Mammary epithelial cell (primary cell): ENCODE measurements at regions of chr14 and their contacts with region 1.

Region 1: DNA sequence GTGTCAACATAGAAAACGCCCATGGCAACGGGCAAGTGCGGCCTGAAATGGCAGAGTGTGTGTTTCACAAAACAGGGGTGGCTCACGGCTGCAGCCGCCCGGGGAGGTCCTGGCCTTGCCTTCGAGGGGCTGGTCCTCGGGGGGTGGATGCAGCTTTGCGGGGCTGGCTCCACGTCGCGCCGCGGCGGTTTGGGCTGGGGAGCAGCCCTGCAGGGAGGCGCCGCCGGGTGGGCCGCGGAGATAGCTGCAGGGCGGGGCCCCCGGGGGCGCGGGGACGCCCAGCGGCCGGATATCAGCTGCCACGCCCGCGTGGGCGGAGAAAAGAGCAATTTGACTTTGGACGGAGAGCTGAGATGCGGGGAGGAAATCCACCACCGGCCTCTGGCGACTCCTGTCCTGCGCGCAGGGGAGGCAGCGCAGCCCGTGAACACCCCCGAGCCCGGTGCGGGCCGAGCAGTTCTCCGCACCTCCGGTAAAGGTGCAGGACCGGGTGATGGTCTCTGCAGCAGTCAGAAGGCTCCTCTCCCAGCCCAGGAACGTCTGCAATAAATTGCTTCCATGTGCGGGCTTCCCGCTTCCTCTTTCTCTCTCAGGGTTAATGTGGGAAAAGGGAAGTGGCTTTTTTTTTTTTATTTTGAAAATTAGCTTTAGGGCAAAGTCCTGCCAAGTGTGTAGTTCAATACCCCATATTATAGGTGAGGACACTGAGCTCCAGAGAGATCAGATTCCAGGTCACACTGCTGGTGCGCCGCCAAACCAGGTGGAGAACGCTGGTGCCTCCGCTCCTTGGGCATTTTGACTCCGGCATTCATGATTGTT is 110.5 kb downstream of the ARF6 start:
- DNase-seq: peak; percentile 78
- H3K4me3 ChIP-seq: peak overlapping the region; percentile 32 to 46 (median 42)
- H3K27ac ChIP-seq: peak overlapping the region; percentile 97
- H3K4me1 ChIP-seq: peaks cover 73% of the 10 kb centered on the region
- H3K27me3 ChIP-seq: no peaks in the 10 kb centered on the region
- CTCF ChIP-seq: peak in 1 of 2 donors; percentile 21

Region 2: DNA sequence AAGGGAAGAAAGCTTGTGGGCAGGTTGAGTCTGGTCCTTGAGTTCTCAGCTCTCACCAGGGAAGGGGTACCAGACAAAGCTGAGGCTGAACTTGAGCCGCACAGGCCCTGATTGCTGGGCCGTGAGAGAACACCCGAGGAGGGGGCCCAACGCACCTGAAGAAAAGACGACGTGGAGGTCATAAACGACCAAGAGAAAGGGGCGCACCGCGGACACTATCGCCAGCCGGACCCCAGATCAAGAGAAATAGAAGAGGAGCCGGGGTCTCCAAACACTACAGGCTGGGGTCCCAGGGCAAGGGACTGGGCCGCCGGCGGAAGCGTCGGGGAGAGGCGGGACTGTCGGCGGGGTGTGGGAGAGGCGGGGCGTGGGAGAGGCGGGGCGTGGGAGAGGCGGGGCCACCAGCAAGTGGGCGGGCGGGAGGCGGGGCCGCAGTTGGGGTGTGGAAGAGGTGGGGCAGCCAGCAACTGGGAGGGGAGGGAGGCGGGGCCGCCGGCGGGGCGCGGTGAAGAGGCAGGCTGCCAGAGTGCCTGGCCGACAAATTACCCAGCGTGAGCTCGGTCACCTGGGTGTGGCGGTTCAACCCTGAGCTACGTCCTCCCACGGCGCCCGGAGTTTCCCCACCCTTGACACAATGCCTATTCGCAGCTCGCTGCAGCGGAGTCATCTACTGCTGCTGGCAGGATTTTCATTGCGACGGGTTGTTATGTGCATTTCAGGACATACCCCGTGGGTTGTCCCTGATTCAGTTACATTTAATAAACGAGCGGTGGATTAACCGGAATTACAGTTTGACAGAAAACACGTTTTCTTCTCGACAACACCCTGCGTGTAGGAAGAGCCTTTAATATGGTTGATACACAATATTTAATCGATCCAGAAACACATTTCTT is 135.3 kb before region 1 on chr14:
- CTCF ChIA-PET with region 1: no interaction called
- dilution Hi-C with region 1: no loop called
- in situ Hi-C with region 1: loop called in 1 of 2 experiments (anchors 5 kb)
- intact Hi-C with region 1: loop called (anchors 1 kb)
- DNase-seq: peak; percentile 97
- H3K4me3 ChIP-seq: peak overlapping the region; percentile 59 to 70 (median 60)
- H3K27ac ChIP-seq: peak overlapping the region; percentile 81
- H3K4me1 ChIP-seq: peaks cover 17% of the 10 kb centered on the region
- H3K27me3 ChIP-seq: no peaks in the 10 kb centered on the region
- CTCF ChIP-seq: no peak

Region 3: GRCh38 chr14:49908432-49908781 is 95.0 kb before region 1 on chr14:
- CTCF ChIA-PET with region 1: interaction called, 6 read pairs
- dilution Hi-C with region 1: loop called (anchors 5 kb)
- in situ Hi-C with region 1: no loop called
- intact Hi-C with region 1: no loop called
- DNase-seq: peak; percentile 65
- H3K4me3 ChIP-seq: no peak overlapping the region
- H3K27ac ChIP-seq: peak overlapping the region; percentile 94
- H3K4me1 ChIP-seq: peaks cover 34% of the 10 kb centered on the region
- H3K27me3 ChIP-seq: no peaks in the 10 kb centered on the region
- CTCF ChIP-seq: no peak

Region 4: GRCh38 chr14:49971156-49972130 is 32.0 kb before region 1 on chr14:
- CTCF ChIA-PET with region 1: no interaction called
- dilution Hi-C with region 1: no loop called
- in situ Hi-C with region 1: no loop called
- intact Hi-C with region 1: loop called (anchors 1 kb)
- DNase-seq: no peak
- H3K4me3 ChIP-seq: no peak overlapping the region
- H3K27ac ChIP-seq: peak overlapping the region; percentile 90
- H3K4me1 ChIP-seq: peaks cover 70% of the 10 kb centered on the region
- H3K27me3 ChIP-seq: no peaks in the 10 kb centered on the region
- CTCF ChIP-seq: no peak

Region 5: DNA sequence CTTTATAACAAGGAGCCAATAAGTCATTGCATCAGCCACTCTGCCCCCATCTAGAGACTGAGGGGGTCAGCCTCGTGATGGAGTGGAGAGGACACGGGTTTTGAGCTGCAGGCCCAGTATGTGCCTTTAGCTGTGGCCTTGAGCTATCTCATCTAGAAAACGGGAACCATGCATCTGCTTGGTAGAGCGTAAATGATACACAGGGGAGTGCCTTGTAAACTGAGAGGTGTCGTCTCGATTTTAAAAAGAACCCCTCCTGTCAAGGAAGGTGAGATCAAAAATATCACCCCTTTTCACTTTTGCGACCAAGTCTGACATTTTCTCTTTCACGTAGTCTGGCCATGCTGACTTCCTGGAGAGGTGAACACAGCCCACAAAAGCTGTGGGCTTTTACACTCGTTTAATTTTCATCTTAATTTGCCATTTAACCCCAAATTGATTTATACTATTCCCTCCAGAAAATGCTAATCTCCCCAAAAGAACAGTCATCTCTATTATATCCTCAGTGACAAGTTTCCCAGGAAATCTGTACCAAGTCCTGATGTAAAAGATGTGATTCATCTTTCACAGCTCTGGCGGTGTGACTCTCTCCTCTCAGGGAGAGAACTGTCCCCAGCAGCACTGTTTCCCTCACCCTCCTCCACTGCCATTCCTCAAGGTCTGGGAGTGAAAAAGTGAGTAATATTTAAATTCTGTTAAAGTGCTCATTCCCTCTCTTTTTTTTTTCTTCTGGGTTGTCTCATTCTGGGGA is 82.3 kb after region 1 on chr14:
- CTCF ChIA-PET with region 1: no interaction called
- dilution Hi-C with region 1: no loop called
- in situ Hi-C with region 1: loop called in 1 of 2 experiments (anchors 10 kb)
- intact Hi-C with region 1: loop called (anchors 5 kb)
- DNase-seq: peak; percentile 78
- H3K4me3 ChIP-seq: no peak overlapping the region
- H3K27ac ChIP-seq: no peak overlapping the region
- H3K4me1 ChIP-seq: peaks cover 30% of the 10 kb centered on the region
- H3K27me3 ChIP-seq: no peaks in the 10 kb centered on the region
- CTCF ChIP-seq: no peak